Posterior cingulate gyrus (tissue), 11 donors: ENCODE measurements at regions of chr2 and their contacts with region 1.

Region 1: DNA sequence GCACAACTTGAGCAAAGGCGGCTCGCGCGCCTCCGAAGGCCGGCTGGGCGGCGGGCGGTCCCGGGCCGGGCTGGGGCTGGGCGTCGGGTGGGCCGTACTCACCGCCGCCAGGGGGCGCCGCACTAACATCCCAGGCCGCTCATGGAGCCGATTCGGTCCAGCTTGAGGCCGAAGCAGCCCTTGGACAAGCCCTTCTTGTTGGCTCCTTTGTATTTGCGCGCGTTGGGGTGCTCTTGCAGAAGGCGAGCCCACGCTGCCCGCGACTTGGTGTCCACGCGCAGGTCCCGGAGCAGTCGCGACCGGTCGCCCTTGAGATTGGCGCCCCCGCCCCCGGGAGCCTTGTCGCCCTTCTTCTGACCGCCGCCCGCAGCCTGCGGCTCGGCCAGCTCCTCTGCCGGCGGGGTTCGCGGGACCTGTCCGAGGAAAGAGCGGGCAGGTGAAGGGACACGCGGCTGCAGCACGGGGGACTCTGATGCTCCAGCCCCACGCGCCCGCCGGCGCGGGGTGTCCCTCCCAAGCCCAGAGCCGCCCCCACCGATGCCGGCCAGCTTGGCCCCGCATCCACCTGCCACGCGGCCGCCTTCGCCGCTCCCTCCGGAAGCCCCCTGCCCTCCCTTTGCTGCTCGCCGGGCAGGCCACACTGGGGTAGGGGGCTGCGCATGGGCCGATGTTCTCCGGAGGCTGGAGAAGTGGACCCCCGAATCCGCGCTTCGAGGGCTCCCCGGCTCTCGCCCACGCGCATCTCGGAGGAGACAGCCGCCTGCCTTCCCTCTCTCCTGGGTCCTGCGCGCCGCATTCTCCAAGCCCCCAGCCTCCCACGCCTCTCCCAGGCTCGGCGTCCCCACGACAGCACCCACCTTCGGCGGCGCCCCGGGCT is 655 bp downstream of the NPPC start:
- DNase-seq: peak; percentile 58 to 96 (median 78)

Region 2: DNA sequence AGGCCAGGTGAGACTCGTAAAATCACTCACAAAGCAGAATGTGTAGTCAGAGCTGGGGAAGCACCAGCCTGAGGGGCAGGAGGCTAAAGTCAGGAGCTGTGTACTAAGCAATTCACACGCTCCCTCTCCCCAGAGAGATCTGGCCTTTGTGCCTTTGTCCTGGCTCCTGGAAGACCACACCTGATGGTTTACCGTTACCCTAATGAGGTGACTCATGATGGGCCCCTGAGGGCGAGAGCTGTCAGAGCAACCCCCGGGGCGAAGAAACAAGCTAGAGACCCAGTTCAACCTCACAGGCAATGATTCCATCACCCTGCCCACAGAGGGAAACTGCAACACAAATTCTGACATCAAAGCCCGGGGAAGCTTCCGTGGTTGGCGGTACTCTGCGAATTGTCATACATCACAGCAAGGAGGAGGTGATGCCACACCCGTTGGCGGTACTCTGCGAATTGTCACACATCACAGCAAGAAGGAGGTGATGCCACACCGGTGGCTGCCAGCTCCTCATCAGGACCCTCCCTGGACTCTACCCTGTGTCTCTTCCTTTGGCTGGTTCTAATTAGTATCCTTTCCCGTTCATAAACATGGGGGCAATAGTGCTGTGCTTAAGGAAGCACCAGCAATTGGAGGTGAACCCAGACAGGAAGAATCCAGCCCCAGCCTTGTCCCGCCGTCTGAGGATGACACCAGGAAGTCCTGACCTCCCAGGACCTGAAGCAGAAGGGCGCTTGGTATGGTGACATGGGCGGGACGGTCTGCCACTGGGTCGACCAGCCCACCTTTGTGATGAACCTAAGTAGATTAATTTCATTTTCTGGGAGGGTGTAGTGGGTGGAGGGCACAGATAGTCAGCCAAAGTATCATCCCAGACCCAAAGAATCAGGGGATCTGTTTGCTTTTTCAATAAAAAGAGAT is 499.5 kb before region 1 on chr2:
- intact Hi-C with region 1: no loop called
- DNase-seq: peak in 1 of 10 donors; percentile 44

Region 3: DNA sequence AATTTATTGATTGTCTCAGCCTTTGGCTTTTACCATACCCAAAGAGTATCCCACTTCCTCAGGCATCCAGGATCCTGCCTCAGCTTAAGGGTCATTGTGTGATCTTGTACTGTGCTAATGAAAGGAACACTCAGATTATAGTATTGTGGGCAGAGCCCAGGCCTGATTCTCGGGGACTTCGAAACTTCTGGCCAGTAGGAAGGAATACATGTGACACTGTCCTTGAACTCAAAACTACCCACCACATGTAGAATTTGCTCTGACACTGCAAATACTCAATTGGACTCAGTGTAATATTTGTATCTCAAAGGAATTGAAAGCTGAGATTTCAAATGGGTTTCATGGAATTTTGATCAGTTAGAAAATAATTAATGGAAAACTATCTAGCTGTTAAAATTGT is 51.9 kb after region 1 on chr2:
- intact Hi-C with region 1: no loop called
- DNase-seq: no peak

Region 4: GRCh38 chr2:232142049-232142448 is 216.5 kb after region 1 on chr2:
- intact Hi-C with region 1: loop called (anchors 1 kb)
- DNase-seq: peak in 5 of 10 donors; percentile 28 to 85 (median 49)

Region 5: GRCh38 chr2:232327105-232328041 is 401.8 kb after region 1 on chr2:
- intact Hi-C with region 1: loop called (anchors 1 kb)
- DNase-seq: peak in 9 of 10 donors; percentile 61 to 97 (median 81)

Region 6: GRCh38 chr2:232444409-232445148 is 519.0 kb after region 1 on chr2:
- intact Hi-C with region 1: loop called (anchors 5 kb)
- DNase-seq: peak in 4 of 10 donors; percentile 25 to 91 (median 44)